BJ (cell line): ENCODE measurements at regions of chr6 and their contacts with region 1.

Region 1: DNA sequence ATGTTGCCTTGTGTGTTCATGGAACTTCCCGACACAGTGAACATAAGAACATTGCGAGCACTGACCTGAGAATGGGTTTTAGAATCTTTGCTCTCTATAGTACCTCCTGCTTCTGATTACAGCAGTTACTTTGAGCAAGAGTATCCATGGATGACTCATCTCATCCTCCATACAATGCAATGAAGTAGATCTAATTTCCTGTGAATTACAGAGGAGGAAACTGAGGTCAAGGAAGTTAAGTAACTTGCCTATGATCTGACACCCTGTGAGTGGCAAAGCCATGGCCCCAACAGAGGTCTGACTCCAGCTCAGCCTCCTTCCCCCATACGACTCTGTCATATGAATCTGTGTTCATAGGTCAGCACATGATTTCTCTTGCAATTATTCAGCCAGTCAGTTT is 518.1 kb downstream of the TFAP2A start:
- DNase-seq: no peak
- H3K4me3 ChIP-seq: no peak overlapping the region
- H3K27me3 ChIP-seq: no peaks in the 10 kb centered on the region
- CTCF ChIP-seq: no peak

Region 2: DNA sequence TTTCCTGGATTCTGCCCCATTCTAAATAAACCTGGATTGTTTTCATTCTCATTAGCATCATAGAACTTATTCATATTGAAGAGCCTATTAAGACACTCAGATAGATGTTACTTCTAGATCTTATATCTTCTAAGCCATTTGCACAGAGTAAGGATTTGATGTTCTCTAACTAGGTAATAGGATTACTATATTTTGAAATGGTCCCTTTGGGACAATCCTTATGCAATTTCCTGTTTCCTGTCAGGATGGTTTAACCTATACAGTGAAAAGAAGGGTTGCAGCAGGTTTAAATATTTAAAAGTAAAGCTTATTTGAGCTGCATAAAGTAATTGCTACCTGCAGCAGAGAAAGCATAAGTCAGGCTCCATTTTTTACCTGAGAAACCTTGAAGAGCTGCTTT is 342.0 kb before region 1 on chr6:
- CTCF ChIA-PET with region 1: no interaction called
- POLR2A ChIA-PET with region 1: interaction called, 19 read pairs
- DNase-seq: no peak
- H3K4me3 ChIP-seq: no peak overlapping the region
- H3K27me3 ChIP-seq: no peaks in the 10 kb centered on the region
- CTCF ChIP-seq: no peak

Region 3: GRCh38 chr6:9875615-9876353 is 21.0 kb before region 1 on chr6:
- CTCF ChIA-PET with region 1: no interaction called
- POLR2A ChIA-PET with region 1: no interaction called
- DNase-seq: peak; percentile 5
- H3K4me3 ChIP-seq: no peak overlapping the region
- H3K27me3 ChIP-seq: no peaks in the 10 kb centered on the region; the same call in 1 of the 2 replicates
- CTCF ChIP-seq: no peak